Activated naive CD4-positive, alpha-beta T cell treated with anti-CD3 and anti-CD28 coated beads for 36 hours (primary cell): ENCODE measurements at regions of chr12 and their contacts with region 1.

Region 1: GRCh38 chr12:117857632-117858612 is 110.9 kb downstream of the KSR2 start:
- DNase-seq: peak; percentile 76
- H3K4me3 Mint-ChIP-seq: no peak overlapping the region
- H3K27ac Mint-ChIP-seq: no peak overlapping the region
- H3K4me1 Mint-ChIP-seq: no peaks in the 10 kb centered on the region
- H3K27me3 Mint-ChIP-seq: peaks cover 2% of the 10 kb centered on the region

Region 2: GRCh38 chr12:116222358-116222757 is 1635.6 kb before region 1 on chr12:
- CTCF ChIA-PET with region 1: no interaction called
- intact Hi-C with region 1: no loop called
- DNase-seq: peak; percentile 84
- H3K4me3 Mint-ChIP-seq: no peak overlapping the region
- H3K27ac Mint-ChIP-seq: no peak overlapping the region
- H3K4me1 Mint-ChIP-seq: peaks cover 32% of the 10 kb centered on the region
- H3K27me3 Mint-ChIP-seq: no peaks in the 10 kb centered on the region

Region 3: GRCh38 chr12:118189741-118190191 is 331.8 kb after region 1 on chr12:
- CTCF ChIA-PET with region 1: interaction called, 10 read pairs
- intact Hi-C with region 1: no loop called
- DNase-seq: no peak
- H3K4me3 Mint-ChIP-seq: no peak overlapping the region
- H3K27ac Mint-ChIP-seq: no peak overlapping the region
- H3K4me1 Mint-ChIP-seq: peaks cover 10% of the 10 kb centered on the region
- H3K27me3 Mint-ChIP-seq: no peaks in the 10 kb centered on the region